ENCODE measurements at regions of chr6 and their contacts with region 1.

Region 1: GRCh38 chr6:70304616-70305015 is 1.7 kb upstream of the COL9A1 start:
- DNase-seq: no peak
- CTCF ChIP-seq: no peak

Region 2: DNA sequence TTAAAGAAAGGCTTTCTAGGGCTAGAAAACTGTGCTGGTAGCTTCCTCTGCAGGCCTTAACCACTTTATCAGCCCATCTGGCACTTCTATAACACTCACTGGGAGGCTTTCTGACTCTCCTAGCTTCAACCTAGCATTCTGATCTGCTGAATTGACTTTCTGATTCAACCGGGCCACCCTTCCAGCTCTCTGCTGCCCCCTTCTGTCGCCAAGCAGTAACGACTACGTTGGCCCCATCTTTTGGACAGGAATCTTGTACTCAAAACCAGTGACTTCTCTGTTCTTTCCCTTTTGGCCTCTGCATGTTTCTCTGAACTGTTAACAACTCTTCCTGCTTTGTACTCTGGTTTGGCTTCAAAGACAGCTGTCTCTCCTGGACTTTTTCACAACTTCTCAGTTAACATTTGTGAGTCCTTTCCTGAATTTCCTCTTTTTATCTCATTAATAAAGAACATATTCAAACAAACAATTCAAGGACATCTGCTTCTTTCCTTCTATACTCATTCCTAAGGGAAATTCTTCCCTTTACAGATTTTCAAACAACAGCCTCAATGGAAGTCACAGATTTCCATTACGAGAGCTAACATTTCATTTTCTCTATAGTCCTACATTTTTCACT is 64.8 kb after region 1 on chr6:
- in situ Hi-C with region 1: loop called (anchors 10 kb)
- DNase-seq: peak; percentile 46
- CTCF ChIP-seq: peak; percentile 97

Region 3: DNA sequence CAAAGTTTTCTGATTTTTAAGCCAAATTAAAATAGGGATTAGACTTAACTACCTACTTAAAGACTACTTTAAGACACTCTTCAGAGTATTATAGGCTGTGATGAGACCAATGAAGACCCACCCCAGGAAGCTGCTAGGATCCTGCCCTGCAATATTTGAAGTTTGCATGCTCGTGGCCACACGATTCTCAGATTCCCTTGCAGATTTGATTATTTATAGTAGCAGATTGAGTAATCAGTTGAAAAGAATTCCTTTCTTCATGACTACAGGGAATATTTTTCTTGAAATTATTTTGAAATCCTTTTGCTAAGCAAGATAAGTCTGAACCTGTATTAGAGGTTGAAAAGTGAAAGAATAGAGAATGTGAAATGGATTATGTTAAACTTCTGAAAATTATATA is 529.9 kb after region 1 on chr6:
- in situ Hi-C with region 1: no loop called
- DNase-seq: no peak
- CTCF ChIP-seq: no peak

Measured in GM13977 (cell line).